ENCODE measurements at regions of chr13 and their contacts with region 1.

Region 1: GRCh38 chr13:113029487-113030258 is 60.7 kb downstream of the MCF2L start:
- DNase-seq: no peak
- H3K4me3 ChIP-seq: no peak overlapping the region
- CTCF ChIP-seq: no peak
- POLR2A ChIP-seq: no peak

Region 2: DNA sequence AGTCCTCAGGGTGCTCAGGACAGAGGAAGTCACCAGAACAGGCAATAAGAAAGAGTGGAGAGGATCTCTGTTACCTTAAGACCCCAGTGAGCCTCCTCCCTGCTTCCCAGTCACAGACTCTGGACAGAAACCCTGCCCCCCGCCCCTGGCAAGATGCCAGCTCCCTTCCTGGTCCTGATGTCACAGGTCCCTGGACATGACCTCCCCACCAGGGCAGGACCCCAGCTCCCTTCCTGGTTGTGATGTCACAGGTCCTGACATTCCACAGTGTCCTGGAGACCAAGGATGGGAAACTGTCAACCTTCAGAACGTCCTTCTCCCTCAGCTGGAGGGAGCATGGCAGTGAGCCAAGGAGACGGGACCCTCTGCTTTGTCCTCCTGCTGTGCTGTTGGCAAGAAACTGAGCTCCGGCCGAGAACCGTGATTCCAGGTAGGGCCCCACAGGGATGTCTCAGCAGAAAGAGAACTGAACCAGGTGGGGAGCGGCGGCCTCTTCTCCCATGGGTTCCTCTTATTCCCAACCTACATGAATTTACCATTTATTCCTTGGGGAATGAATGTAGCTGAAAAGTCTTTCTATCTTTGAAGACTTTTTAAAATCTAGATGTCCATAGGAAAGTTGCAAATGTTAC is 653.5 kb before region 1 on chr13 and contains the start of gene SPACA7:
- intact Hi-C with region 1: no loop called
- DNase-seq: no peak
- H3K4me3 ChIP-seq: no peak within 1 kb of the TSS
- CTCF ChIP-seq: no peak
- POLR2A ChIP-seq: no peak
- total RNA-seq, gene SPACA7: not detected

Region 3: GRCh38 chr13:112942689-112943308 is 86.9 kb before region 1 on chr13:
- intact Hi-C with region 1: loop called (anchors 5 kb)
- DNase-seq: peak; percentile 96 to 99
- H3K4me3 ChIP-seq: peak overlapping the region; percentile 18
- CTCF ChIP-seq: peak in 1 of 3 donors; percentile 65
- POLR2A ChIP-seq: no peak